ENCODE measurements at regions of chr1 and their contacts with region 1.

Region 1: GRCh38 chr1:21176586-21177555 is at the start of gene EIF4G3:
- DNase-seq: peak; percentile 96 to 100 (median 99)
- ATAC-seq: peak; percentile 96
- H3K4me3 ChIP-seq: peak within 1 kb of the TSS; percentile 87
- H3K4me3 Mint-ChIP-seq: peak within 1 kb of the TSS; percentile 83 to 97 (median 91)
- H3K27ac ChIP-seq: peak within 1 kb of the TSS; percentile 75
- H3K27ac Mint-ChIP-seq: peak within 1 kb of the TSS; percentile 87 to 95 (median 92)
- H3K4me1 ChIP-seq: peaks cover 8 to 9% of the 10 kb centered on the region in 2 donors
- H3K4me1 Mint-ChIP-seq: peaks cover 11 to 28% (median 19%) of the 10 kb centered on the region in 7 donors
- H3K27me3 ChIP-seq: no peaks in the 10 kb centered on the region
- H3K27me3 Mint-ChIP-seq: peaks cover 0 to 10% (median 0%) of the 10 kb centered on the region in 5 donors
- total RNA-seq, gene EIF4G3: 15.0 to 46.3 (median 29.1) TPM

Region 2: GRCh38 chr1:20185834-20186782 is 990.8 kb before region 1 on chr1 and contains the starts of genes PLA2G2C and UBXN10:
- CTCF ChIA-PET with region 1: no interaction called
- POLR2A ChIA-PET with region 1: no interaction called
- intact Hi-C with region 1: loop called in 1 of 2 experiments (anchors 10 kb)
- DNase-seq: peak; percentile 19 to 73 (median 49)
- ATAC-seq: peak; percentile 53
- H3K4me3 ChIP-seq: peak within 1 kb of the TSS; percentile 68
- H3K4me3 Mint-ChIP-seq: peak within 1 kb of the TSS; percentile 80 to 91 (median 88)
- H3K27ac ChIP-seq: peak within 1 kb of the TSS; percentile 40
- H3K27ac Mint-ChIP-seq: peak within 1 kb of the TSS; percentile 80 to 90 (median 87)
- H3K4me1 ChIP-seq: peaks cover 19 to 41% of the 10 kb centered on the region in 2 donors
- H3K4me1 Mint-ChIP-seq: peaks cover 42 to 56% (median 56%) of the 10 kb centered on the region in 7 donors
- H3K27me3 ChIP-seq: no peaks in the 10 kb centered on the region
- H3K27me3 Mint-ChIP-seq: peaks cover 0 to 14% (median 0%) of the 10 kb centered on the region in 5 donors
- total RNA-seq, gene PLA2G2C: 0.46 TPM in 1 of 5 experiments, not detected in the others
- total RNA-seq, gene UBXN10: 0.37 to 1.1 (median 0.73) TPM in 3 of 5 experiments, not detected in the others

Region 3: GRCh38 chr1:20633190-20634064 is 543.4 kb before region 1 on chr1 and contains the start of gene PINK1:
- CTCF ChIA-PET with region 1: no interaction called
- POLR2A ChIA-PET with region 1: interaction called, 4 read pairs
- intact Hi-C with region 1: loop called in 1 of 2 experiments (anchors 1 kb)
- DNase-seq: peak; percentile 78 to 99 (median 90)
- ATAC-seq: peak; percentile 92
- H3K4me3 ChIP-seq: peak within 1 kb of the TSS; percentile 80
- H3K4me3 Mint-ChIP-seq: peak within 1 kb of the TSS; percentile 78 to 98 (median 94)
- H3K27ac ChIP-seq: peak within 1 kb of the TSS; percentile 86
- H3K27ac Mint-ChIP-seq: peak within 1 kb of the TSS; percentile 69 to 94 (median 88)
- H3K4me1 ChIP-seq: peaks cover 8 to 9% of the 10 kb centered on the region in 2 donors
- H3K4me1 Mint-ChIP-seq: peaks cover 0 to 13% (median 8%) of the 10 kb centered on the region in 7 donors
- H3K27me3 ChIP-seq: no peaks in the 10 kb centered on the region
- H3K27me3 Mint-ChIP-seq: peaks cover 0 to 22% (median 2%) of the 10 kb centered on the region in 5 donors
- total RNA-seq, gene PINK1: 4.3 to 19.7 (median 13.1) TPM

Region 4: GRCh38 chr1:20717452-20718342 is 459.2 kb before region 1 on chr1 and contains the start of gene KIF17:
- CTCF ChIA-PET with region 1: no interaction called
- POLR2A ChIA-PET with region 1: no interaction called
- intact Hi-C with region 1: loop called in 1 of 2 experiments (anchors 5 kb)
- DNase-seq: peak; percentile 39 to 74 (median 62)
- ATAC-seq: peak; percentile 79
- H3K4me3 ChIP-seq: no peak within 1 kb of the TSS
- H3K4me3 Mint-ChIP-seq: peak within 1 kb of the TSS; percentile 55 to 85 (median 72)
- H3K27ac ChIP-seq: no peak within 1 kb of the TSS
- H3K27ac Mint-ChIP-seq: peak within 1 kb of the TSS in 4 of 9 donors; percentile 25 to 74 (median 50)
- H3K4me1 ChIP-seq: peaks cover 0 to 3% of the 10 kb centered on the region in 2 donors
- H3K4me1 Mint-ChIP-seq: peaks cover 0 to 11% (median 8%) of the 10 kb centered on the region in 7 donors
- H3K27me3 ChIP-seq: no peaks in the 10 kb centered on the region
- H3K27me3 Mint-ChIP-seq: peaks cover 16 to 39% (median 22%) of the 10 kb centered on the region in 5 donors
- total RNA-seq, gene KIF17: not detected

Region 5: GRCh38 chr1:20753589-20753988 is 423.3 kb before region 1 on chr1:
- CTCF ChIA-PET with region 1: no interaction called
- POLR2A ChIA-PET with region 1: no interaction called
- intact Hi-C with region 1: no loop called
- DNase-seq: no peak
- ATAC-seq: no peak
- H3K4me3 ChIP-seq: no peak overlapping the region
- H3K4me3 Mint-ChIP-seq: no peak overlapping the region
- H3K27ac ChIP-seq: no peak overlapping the region
- H3K27ac Mint-ChIP-seq: peak overlapping the region in 3 of 9 donors; percentile 12 to 69 (median 14)
- H3K4me1 ChIP-seq: no peaks in the 10 kb centered on the region
- H3K4me1 Mint-ChIP-seq: peaks cover 0 to 4% (median 0%) of the 10 kb centered on the region in 7 donors
- H3K27me3 ChIP-seq: no peaks in the 10 kb centered on the region
- H3K27me3 Mint-ChIP-seq: no peaks in the 10 kb centered on the region

Region 6: GRCh38 chr1:21034725-21035628 is 141.9 kb before region 1 on chr1:
- CTCF ChIA-PET with region 1: no interaction called
- POLR2A ChIA-PET with region 1: no interaction called
- intact Hi-C with region 1: no loop called
- DNase-seq: no peak
- ATAC-seq: no peak
- H3K4me3 ChIP-seq: no peak overlapping the region
- H3K4me3 Mint-ChIP-seq: no peak overlapping the region
- H3K27ac ChIP-seq: no peak overlapping the region
- H3K27ac Mint-ChIP-seq: no peak overlapping the region
- H3K4me1 ChIP-seq: no peaks in the 10 kb centered on the region
- H3K4me1 Mint-ChIP-seq: peaks cover 0 to 5% (median 0%) of the 10 kb centered on the region in 7 donors
- H3K27me3 ChIP-seq: no peaks in the 10 kb centered on the region
- H3K27me3 Mint-ChIP-seq: no peaks in the 10 kb centered on the region

Region 7: DNA sequence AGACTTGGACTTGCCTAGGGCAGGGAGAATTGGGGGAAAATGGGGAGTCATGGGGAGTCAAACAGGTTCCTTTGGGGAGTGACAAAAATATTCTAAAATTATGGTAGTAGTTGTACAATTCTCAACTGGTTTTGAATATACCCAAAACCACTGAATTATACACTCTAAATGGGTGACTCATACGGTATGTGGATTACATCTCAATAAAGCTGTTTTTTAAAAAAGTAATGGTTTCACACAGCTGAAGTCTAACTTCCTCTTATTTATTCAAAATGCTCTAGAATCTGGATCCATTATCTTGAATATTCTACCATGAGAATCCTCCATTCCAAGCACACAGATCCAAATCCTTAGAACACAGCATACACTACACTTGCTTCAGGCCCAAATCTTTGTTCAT is 11.2 kb before region 1 on chr1:
- CTCF ChIA-PET with region 1: no interaction called
- POLR2A ChIA-PET with region 1: no interaction called
- intact Hi-C with region 1: no loop called
- DNase-seq: no peak
- ATAC-seq: peak; percentile 63
- H3K4me3 ChIP-seq: no peak overlapping the region
- H3K4me3 Mint-ChIP-seq: no peak overlapping the region
- H3K27ac ChIP-seq: no peak overlapping the region
- H3K27ac Mint-ChIP-seq: peak overlapping the region in 1 of 9 donors; percentile 43
- H3K4me1 ChIP-seq: no peaks in the 10 kb centered on the region
- H3K4me1 Mint-ChIP-seq: peaks cover 0 to 13% (median under 1%) of the 10 kb centered on the region in 7 donors
- H3K27me3 ChIP-seq: no peaks in the 10 kb centered on the region
- H3K27me3 Mint-ChIP-seq: no peaks in the 10 kb centered on the region

Region 8: GRCh38 chr1:21200767-21201166 is 23.9 kb after region 1 on chr1:
- CTCF ChIA-PET with region 1: no interaction called
- POLR2A ChIA-PET with region 1: no interaction called
- intact Hi-C with region 1: loop called in 1 of 2 experiments (anchors 2 kb)
- DNase-seq: no peak
- ATAC-seq: no peak
- H3K4me3 ChIP-seq: no peak overlapping the region
- H3K4me3 Mint-ChIP-seq: no peak overlapping the region
- H3K27ac ChIP-seq: no peak overlapping the region
- H3K27ac Mint-ChIP-seq: no peak overlapping the region
- H3K4me1 ChIP-seq: no peaks in the 10 kb centered on the region
- H3K4me1 Mint-ChIP-seq: no peaks in the 10 kb centered on the region
- H3K27me3 ChIP-seq: no peaks in the 10 kb centered on the region
- H3K27me3 Mint-ChIP-seq: peaks cover 4 to 9% (median 5%) of the 10 kb centered on the region in 5 donors

Region 9: GRCh38 chr1:21439721-21440629 is 263.1 kb after region 1 on chr1 and contains the start of gene NBPF3:
- CTCF ChIA-PET with region 1: no interaction called
- POLR2A ChIA-PET with region 1: no interaction called
- intact Hi-C with region 1: loop called in 1 of 2 experiments (anchors 5 kb)
- DNase-seq: peak; percentile 71 to 86 (median 83)
- ATAC-seq: peak; percentile 99
- H3K4me3 ChIP-seq: peak within 1 kb of the TSS; percentile 80
- H3K4me3 Mint-ChIP-seq: peak within 1 kb of the TSS; percentile 89 to 98 (median 94)
- H3K27ac ChIP-seq: peak within 1 kb of the TSS; percentile 74
- H3K27ac Mint-ChIP-seq: peak within 1 kb of the TSS; percentile 73 to 96 (median 92)
- H3K4me1 ChIP-seq: no peaks in the 10 kb centered on the region
- H3K4me1 Mint-ChIP-seq: peaks cover 20 to 35% (median 24%) of the 10 kb centered on the region in 7 donors
- H3K27me3 ChIP-seq: no peaks in the 10 kb centered on the region
- H3K27me3 Mint-ChIP-seq: peaks cover 0 to 42% (median 2%) of the 10 kb centered on the region in 5 donors
- total RNA-seq, gene NBPF3: 5.6 to 18.1 (median 12.0) TPM

Measured in naive thymus-derived CD4-positive, alpha-beta T cell (primary cell).